A549 (cell line): ENCODE measurements at regions of chr2 and their contacts with region 1.

Region 1: DNA sequence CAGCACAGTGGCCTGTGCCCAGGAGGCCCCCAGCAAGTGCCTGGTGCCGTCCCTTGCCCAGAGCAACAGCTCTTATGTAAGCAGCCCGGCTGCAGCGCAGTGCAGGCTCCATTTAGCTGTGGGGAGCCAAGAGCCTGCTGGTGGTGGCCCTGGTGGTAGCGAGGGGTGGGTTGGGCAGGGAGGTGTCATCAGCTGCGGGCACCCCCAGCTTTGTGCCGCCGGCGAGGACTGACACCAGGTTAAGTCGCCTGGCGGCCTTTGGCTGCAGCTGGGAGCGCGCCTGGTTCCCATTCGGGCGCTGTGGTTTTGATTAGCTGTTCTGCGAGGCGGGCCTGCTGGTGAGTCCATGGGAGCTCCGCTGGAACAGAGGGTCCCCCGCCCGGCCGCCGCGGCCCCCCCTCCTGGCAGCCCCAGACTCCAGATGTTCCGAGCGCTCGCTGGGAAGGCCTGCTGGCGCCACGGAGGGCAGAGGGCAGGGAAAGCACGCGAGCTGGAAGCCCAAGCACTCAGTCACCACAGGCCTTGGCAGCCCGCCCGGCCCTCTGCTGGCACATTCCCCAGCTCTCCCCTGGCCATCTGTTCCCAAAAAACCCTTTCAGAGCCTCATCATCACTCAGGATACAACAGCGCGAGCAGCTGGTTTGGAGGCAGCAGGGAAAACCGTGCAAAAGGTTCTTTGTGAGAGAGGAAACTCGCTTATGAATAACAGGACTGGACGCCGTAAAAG is 18.4 kb downstream of the ATOH8 start:
- DNase-seq: peak; percentile 90
- ATAC-seq: peak; percentile 85 to 87
- H3K4me3 ChIP-seq: peak overlapping the region; percentile 13; the same call in 1 of the 3 replicates
- H3K27ac ChIP-seq: peak overlapping the region; percentile 82 to 88
- H3K4me1 ChIP-seq: peaks cover 66% of the 10 kb centered on the region
- CTCF ChIP-seq: peak; percentile 38; the same call in 2 of the 3 replicates
- EP300 ChIP-seq: peak in 1 of 2 experiments; percentile 83; a peak in 2 of 5 replicates
- POLR2A ChIP-seq: no peak
- RAD21 ChIP-seq: peak; percentile 51 to 63

Region 2: GRCh38 chr2:85741833-85742455 is 30.2 kb before region 1 on chr2:
- CTCF ChIA-PET with region 1: interaction called, 159 read pairs
- POLR2A ChIA-PET with region 1: interaction called, 29 read pairs
- DNase-seq: peak; percentile 73 to 92
- ATAC-seq: peak; percentile 81 to 86
- H3K4me3 ChIP-seq: peak overlapping the region; percentile 21; the same call in 2 of the 3 replicates
- H3K27ac ChIP-seq: peak overlapping the region; percentile 93 to 97
- H3K4me1 ChIP-seq: peaks cover 60% of the 10 kb centered on the region
- CTCF ChIP-seq: no peak
- EP300 ChIP-seq: peak; percentile 45 to 89; a peak in 3 of 5 replicates
- POLR2A ChIP-seq: no peak
- RAD21 ChIP-seq: peak in 1 of 2 experiments; percentile 43; a peak in 3 of 5 replicates

Region 3: GRCh38 chr2:85758361-85759256 is 13.6 kb before region 1 on chr2:
- CTCF ChIA-PET with region 1: interaction called, 159 read pairs
- POLR2A ChIA-PET with region 1: interaction called, 9 read pairs
- DNase-seq: no peak
- ATAC-seq: no peak
- H3K4me3 ChIP-seq: no peak overlapping the region
- H3K27ac ChIP-seq: peak overlapping the region in 1 of 2 experiments; percentile 21; a peak in 1 of 6 replicates
- H3K4me1 ChIP-seq: peaks cover 47% of the 10 kb centered on the region
- CTCF ChIP-seq: no peak
- EP300 ChIP-seq: no peak
- POLR2A ChIP-seq: no peak
- RAD21 ChIP-seq: no peak

Region 4: DNA sequence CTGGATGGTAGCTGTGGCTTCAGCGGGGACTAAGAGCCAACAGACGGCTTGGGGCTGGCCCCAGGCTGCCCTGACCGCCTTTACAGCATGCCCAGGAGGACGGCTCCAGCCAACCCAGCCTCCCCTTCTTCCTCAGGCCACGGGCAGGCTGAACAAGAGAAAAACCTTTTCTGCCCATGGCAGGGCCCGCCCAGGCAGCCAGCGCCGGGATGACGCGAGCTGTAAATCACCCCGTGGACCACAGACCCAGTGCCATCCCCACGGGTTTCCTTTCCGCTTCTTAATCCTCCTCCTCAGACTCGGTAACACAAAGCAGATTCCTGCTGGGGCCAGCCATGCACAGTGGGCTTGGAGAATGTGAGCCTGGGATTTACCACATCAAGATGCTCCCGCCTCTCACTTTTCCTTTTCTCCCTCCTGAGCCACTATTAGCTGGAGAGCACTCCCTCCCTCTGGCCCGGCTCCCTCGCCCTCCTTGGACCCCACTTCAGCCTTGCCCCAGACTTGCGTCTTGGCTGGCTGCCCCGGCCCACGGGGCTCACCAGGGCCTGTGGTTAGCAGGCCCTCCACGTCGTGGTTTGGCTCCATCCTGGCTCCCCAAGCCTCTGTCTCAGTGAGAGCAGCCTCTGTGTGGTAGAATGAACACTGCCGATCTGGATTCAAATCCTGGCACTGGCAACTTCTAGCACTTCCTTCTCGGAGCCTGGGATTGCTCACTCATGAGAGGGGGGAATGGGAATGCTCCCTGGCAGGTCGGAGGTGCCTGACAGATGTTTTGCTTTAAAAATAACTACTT is 13.0 kb after region 1 on chr2:
- CTCF ChIA-PET with region 1: interaction called, 10 read pairs
- POLR2A ChIA-PET with region 1: no interaction called
- DNase-seq: no peak
- ATAC-seq: peak in 1 of 2 experiments; percentile 4; a peak in 2 of 6 replicates
- H3K4me3 ChIP-seq: no peak overlapping the region
- H3K27ac ChIP-seq: no peak overlapping the region
- H3K4me1 ChIP-seq: peaks cover 10% of the 10 kb centered on the region; the same call in 2 of the 3 replicates
- CTCF ChIP-seq: no peak
- EP300 ChIP-seq: no peak
- POLR2A ChIP-seq: no peak
- RAD21 ChIP-seq: no peak

Region 5: DNA sequence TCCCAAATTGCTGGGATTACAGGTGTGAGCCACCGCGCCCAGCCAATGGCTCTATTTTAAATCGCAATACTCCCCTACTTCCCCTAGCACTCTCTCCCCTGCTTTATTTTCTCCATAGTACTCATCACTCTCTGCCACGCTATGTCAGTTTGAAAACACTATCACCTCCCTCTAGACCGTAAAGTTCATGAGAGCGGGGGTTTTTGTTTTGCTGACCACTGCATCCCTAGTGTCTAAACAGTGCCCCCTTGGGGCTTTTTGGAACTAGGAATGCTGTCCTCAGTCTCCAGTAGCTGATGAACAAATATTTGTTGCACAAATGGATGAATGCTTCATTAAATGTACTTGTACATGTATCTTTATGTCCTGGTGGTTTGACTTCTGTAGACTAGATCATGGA is 25.7 kb after region 1 on chr2:
- CTCF ChIA-PET with region 1: interaction called, 1,675 read pairs
- POLR2A ChIA-PET with region 1: no interaction called
- DNase-seq: peak; percentile 26 to 43
- ATAC-seq: peak in 1 of 2 experiments; percentile 46; a peak in 2 of 6 replicates
- H3K4me3 ChIP-seq: no peak overlapping the region
- H3K27ac ChIP-seq: peak overlapping the region in 1 of 2 experiments; percentile 6; a peak in 2 of 6 replicates
- H3K4me1 ChIP-seq: peaks cover 43% of the 10 kb centered on the region
- CTCF ChIP-seq: peak; percentile 44
- EP300 ChIP-seq: no peak
- POLR2A ChIP-seq: no peak
- RAD21 ChIP-seq: peak; percentile 64 to 75